ENCODE measurements at regions of chr5 and their contacts with region 1.

Region 1: GRCh38 chr5:163695830-163696578 is 190.6 kb downstream of the MAT2B start:
- DNase-seq: peak; percentile 61

Region 2: DNA sequence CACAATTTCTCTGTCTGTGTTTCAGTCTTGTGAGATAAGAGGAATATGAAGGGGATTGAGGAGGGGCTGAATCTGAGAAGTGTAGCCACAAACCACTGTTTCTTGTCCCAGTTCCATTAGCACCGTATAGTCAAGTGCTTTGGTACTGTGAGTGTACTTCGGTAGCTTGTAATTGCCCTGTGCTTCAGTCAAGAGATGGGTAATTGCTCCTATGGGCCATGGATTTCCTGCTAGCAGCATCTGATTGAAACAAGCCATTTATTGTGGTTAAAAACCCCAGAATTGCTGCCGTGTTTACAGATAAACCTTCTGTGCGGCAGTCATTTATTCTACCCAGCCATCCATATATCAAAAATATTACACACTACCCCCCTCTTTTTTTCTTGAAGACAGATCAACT is 92.0 kb before region 1 on chr5:
- CTCF ChIA-PET with region 1: interaction called, 12 read pairs
- POLR2A ChIA-PET with region 1: no interaction called
- DNase-seq: no peak

Measured in HEK293T (cell line).